ENCODE measurements at regions of chr4 and their contacts with region 1.

Region 1: DNA sequence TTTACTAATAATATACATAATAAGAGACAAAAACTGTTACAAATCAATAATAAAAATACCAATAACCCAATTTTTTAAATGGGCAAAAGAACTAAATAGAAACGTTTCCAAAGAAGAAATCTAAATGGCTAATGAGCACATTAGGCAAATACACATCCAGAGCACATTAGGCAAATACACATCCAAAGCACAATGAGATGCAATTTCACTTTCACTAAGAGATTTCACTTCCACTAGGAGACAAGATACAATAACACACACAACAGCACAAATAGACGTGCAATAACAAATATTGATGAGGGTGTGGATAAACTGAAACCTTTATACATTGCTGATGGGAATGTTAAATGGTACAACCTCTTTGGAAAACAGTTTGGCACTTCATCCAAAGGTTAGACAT is 250.7 kb downstream of the ARAP2 start:
- DNase-seq: no peak
- ATAC-seq: no peak
- H3K4me3 ChIP-seq: no peak overlapping the region
- H3K4me3 Mint-ChIP-seq: no peak overlapping the region
- H3K27ac ChIP-seq: no peak overlapping the region
- H3K27ac Mint-ChIP-seq: no peak overlapping the region
- H3K4me1 ChIP-seq: no peaks in the 10 kb centered on the region
- H3K4me1 Mint-ChIP-seq: no peaks in the 10 kb centered on the region
- H3K27me3 ChIP-seq: no peaks in the 10 kb centered on the region
- H3K27me3 Mint-ChIP-seq: no peaks in the 10 kb centered on the region
- CTCF ChIP-seq: no peak

Region 2: DNA sequence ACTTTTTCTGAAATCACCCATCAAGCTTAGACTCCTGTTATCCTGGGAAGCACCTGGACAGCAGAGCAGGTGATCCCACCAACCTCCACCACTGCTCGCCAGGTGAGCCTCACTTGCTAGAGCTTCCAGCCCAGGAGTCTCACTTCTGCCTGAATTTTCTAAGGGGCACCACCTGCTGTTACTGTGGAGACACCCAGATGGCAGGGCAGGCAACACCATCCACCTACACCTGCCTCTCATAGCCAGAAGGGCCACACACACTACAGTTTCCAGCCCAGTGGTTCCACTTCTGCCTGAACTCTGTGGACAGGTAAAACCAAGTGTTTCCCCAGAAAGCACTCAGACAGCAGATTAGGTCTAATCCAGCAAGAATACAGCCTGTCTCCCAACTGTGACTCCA is 11.3 kb before region 1 on chr4:
- CTCF ChIA-PET with region 1: no interaction called
- POLR2A ChIA-PET with region 1: no interaction called
- intact Hi-C with region 1: loop called in 1 of 2 experiments (anchors 1 kb)
- DNase-seq: no peak
- ATAC-seq: no peak
- H3K4me3 ChIP-seq: no peak overlapping the region
- H3K4me3 Mint-ChIP-seq: no peak overlapping the region
- H3K27ac ChIP-seq: no peak overlapping the region
- H3K27ac Mint-ChIP-seq: no peak overlapping the region
- H3K4me1 ChIP-seq: no peaks in the 10 kb centered on the region
- H3K4me1 Mint-ChIP-seq: no peaks in the 10 kb centered on the region
- H3K27me3 ChIP-seq: no peaks in the 10 kb centered on the region
- H3K27me3 Mint-ChIP-seq: no peaks in the 10 kb centered on the region
- CTCF ChIP-seq: no peak

Region 3: DNA sequence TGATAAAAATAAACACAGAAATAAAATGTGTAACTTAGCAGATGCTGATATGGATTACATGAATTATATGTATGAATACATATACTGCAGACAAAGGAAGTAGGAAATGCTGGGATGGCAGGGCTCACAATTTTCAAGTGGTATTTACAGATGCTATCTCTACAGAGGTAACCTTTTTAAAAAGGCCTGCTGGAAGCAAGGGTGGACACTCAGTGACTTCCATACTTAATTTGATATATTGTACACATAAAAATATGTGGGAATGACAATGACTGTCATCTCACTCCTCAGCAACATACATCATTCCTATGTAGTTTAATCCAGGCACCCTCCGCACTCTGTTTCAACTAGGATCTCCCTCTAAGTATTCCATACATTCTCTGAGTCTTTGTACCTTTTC is 740.7 kb after region 1 on chr4:
- CTCF ChIA-PET with region 1: no interaction called
- POLR2A ChIA-PET with region 1: no interaction called
- intact Hi-C with region 1: no loop called
- DNase-seq: no peak
- ATAC-seq: no peak
- H3K4me3 ChIP-seq: no peak overlapping the region
- H3K4me3 Mint-ChIP-seq: no peak overlapping the region
- H3K27ac ChIP-seq: no peak overlapping the region
- H3K27ac Mint-ChIP-seq: no peak overlapping the region
- H3K4me1 ChIP-seq: no peaks in the 10 kb centered on the region
- H3K4me1 Mint-ChIP-seq: no peaks in the 10 kb centered on the region
- H3K27me3 ChIP-seq: no peaks in the 10 kb centered on the region
- H3K27me3 Mint-ChIP-seq: no peaks in the 10 kb centered on the region
- CTCF ChIP-seq: no peak

Measured in CD4-positive, alpha-beta T cell (primary cell).